HCT116 (cell line): ENCODE measurements at regions of chr3 and their contacts with region 1.

Region 1: GRCh38 chr3:194472290-194472920 is 14.4 kb downstream of the ATP13A3 start:
- DNase-seq: peak; percentile 53
- ATAC-seq: peak; percentile 86
- H3K4me3 ChIP-seq: no peak overlapping the region
- H3K27ac ChIP-seq: no peak overlapping the region
- H3K4me1 ChIP-seq: no peaks in the 10 kb centered on the region
- H3K27me3 ChIP-seq: no peaks in the 10 kb centered on the region
- CTCF ChIP-seq: peak; percentile 87 to 93 (median 91)
- POLR2A ChIP-seq: no peak
- RAD21 ChIP-seq: peak; percentile 96

Region 2: GRCh38 chr3:194315088-194315964 is 157.1 kb before region 1 on chr3:
- CTCF ChIA-PET with region 1: no interaction called
- POLR2A ChIA-PET with region 1: no interaction called
- RAD21 ChIA-PET with region 1: no interaction called
- intact Hi-C with region 1: no loop called
- DNase-seq: peak; percentile 63
- ATAC-seq: peak; percentile 87
- H3K4me3 ChIP-seq: peak overlapping the region; percentile 37 to 51
- H3K27ac ChIP-seq: peak overlapping the region; percentile 51
- H3K4me1 ChIP-seq: peaks cover 26 to 62% of the 10 kb centered on the region in 2 experiments
- H3K27me3 ChIP-seq: no peaks in the 10 kb centered on the region
- CTCF ChIP-seq: peak in 2 of 3 experiments; percentile 81 to 87; a peak in 4 of 6 replicates
- POLR2A ChIP-seq: no peak
- RAD21 ChIP-seq: no peak

Region 3: GRCh38 chr3:194573691-194574437 is 101.5 kb after region 1 on chr3:
- CTCF ChIA-PET with region 1: interaction called, 15 read pairs
- POLR2A ChIA-PET with region 1: no interaction called
- RAD21 ChIA-PET with region 1: interaction called in 1 of 2 experiments, 5 read pairs
- intact Hi-C with region 1: loop called (anchors 1 kb)
- DNase-seq: no peak
- ATAC-seq: peak; percentile 69
- H3K4me3 ChIP-seq: no peak overlapping the region
- H3K27ac ChIP-seq: no peak overlapping the region
- H3K4me1 ChIP-seq: peaks cover 14 to 42% of the 10 kb centered on the region in 2 experiments
- H3K27me3 ChIP-seq: no peaks in the 10 kb centered on the region
- CTCF ChIP-seq: peak; percentile 48 to 68 (median 66)
- POLR2A ChIP-seq: no peak
- RAD21 ChIP-seq: peak; percentile 87